ENCODE measurements at regions of chr13 and their contacts with region 1.

Region 1: GRCh38 chr13:76980075-76980718 is 11.7 kb upstream of the CLN5 start:
- H3K4me3 ChIP-seq: no peak overlapping the region; the same call in none of the 2 replicates
- H3K27ac ChIP-seq: no peak overlapping the region
- H3K4me1 ChIP-seq: peaks cover 4% of the 10 kb centered on the region; the same call in 1 of the 2 replicates
- CTCF ChIP-seq: peak; percentile 87

Region 2: GRCh38 chr13:76245920-76246319 is 734.3 kb before region 1 on chr13:
- CTCF ChIA-PET with region 1: no interaction called
- POLR2A ChIA-PET with region 1: no interaction called
- H3K4me3 ChIP-seq: no peak overlapping the region
- H3K27ac ChIP-seq: no peak overlapping the region
- H3K4me1 ChIP-seq: no peaks in the 10 kb centered on the region
- CTCF ChIP-seq: no peak

Region 3: GRCh38 chr13:76955193-76955592 is 25.0 kb before region 1 on chr13:
- CTCF ChIA-PET with region 1: interaction called, 14 read pairs
- POLR2A ChIA-PET with region 1: no interaction called
- H3K4me3 ChIP-seq: no peak overlapping the region
- H3K27ac ChIP-seq: no peak overlapping the region
- H3K4me1 ChIP-seq: no peaks in the 10 kb centered on the region
- CTCF ChIP-seq: no peak

Region 4: DNA sequence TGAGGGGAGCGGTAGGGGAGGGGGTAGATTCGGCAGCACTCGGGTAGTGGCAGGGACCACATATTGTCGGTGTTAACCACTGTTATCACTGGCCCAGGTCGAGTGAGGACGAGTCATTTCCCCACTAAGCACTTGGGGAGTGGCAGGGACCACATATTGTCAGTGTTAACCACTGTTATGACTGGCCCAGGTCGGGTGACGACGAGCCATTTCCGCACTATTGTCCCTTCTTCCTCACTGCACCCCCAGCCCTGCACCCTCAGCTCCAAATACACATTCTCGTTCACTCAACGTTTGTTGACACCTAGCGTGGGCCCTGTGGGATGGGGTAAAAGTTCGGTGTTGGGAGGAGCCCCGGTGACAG is 11.2 kb after region 1 on chr13:
- CTCF ChIA-PET with region 1: interaction called, 30 read pairs
- POLR2A ChIA-PET with region 1: interaction called, 4 read pairs
- H3K4me3 ChIP-seq: peak overlapping the region; percentile 85
- H3K27ac ChIP-seq: no peak overlapping the region
- H3K4me1 ChIP-seq: no peaks in the 10 kb centered on the region
- CTCF ChIP-seq: no peak

Region 5: GRCh38 chr13:77001963-77002587 is 21.9 kb after region 1 on chr13:
- CTCF ChIA-PET with region 1: interaction called, 10 read pairs
- POLR2A ChIA-PET with region 1: no interaction called
- H3K4me3 ChIP-seq: no peak overlapping the region
- H3K27ac ChIP-seq: no peak overlapping the region
- H3K4me1 ChIP-seq: no peaks in the 10 kb centered on the region
- CTCF ChIP-seq: no peak

Region 6: GRCh38 chr13:77310579-77311279 is 330.5 kb after region 1 on chr13:
- CTCF ChIA-PET with region 1: no interaction called
- POLR2A ChIA-PET with region 1: no interaction called
- H3K4me3 ChIP-seq: no peak overlapping the region
- H3K27ac ChIP-seq: no peak overlapping the region
- H3K4me1 ChIP-seq: peaks cover 5% of the 10 kb centered on the region; the same call in 1 of the 2 replicates
- CTCF ChIP-seq: no peak